ENCODE measurements at regions of chr18 and their contacts with region 1.

Region 1: GRCh38 chr18:74081966-74082741 is 65.5 kb downstream of the FBXO15 start:
- DNase-seq: peak; percentile 40 to 48
- H3K4me3 ChIP-seq: no peak overlapping the region
- H3K4me3 Mint-ChIP-seq: no peak overlapping the region
- H3K27ac Mint-ChIP-seq: no peak overlapping the region
- H3K4me1 ChIP-seq: no peaks in the 10 kb centered on the region
- H3K4me1 Mint-ChIP-seq: no peaks in the 10 kb centered on the region
- H3K27me3 ChIP-seq: no peaks in the 10 kb centered on the region
- H3K27me3 Mint-ChIP-seq: peaks cover 11% of the 10 kb centered on the region
- CTCF ChIP-seq: peak; percentile 18 to 47

Region 2: GRCh38 chr18:74023220-74023619 is 58.9 kb before region 1 on chr18:
- CTCF ChIA-PET with region 1: no interaction called
- POLR2A ChIA-PET with region 1: no interaction called
- intact Hi-C with region 1: no loop called
- DNase-seq: no peak
- H3K4me3 ChIP-seq: no peak overlapping the region
- H3K4me3 Mint-ChIP-seq: no peak overlapping the region
- H3K27ac Mint-ChIP-seq: no peak overlapping the region
- H3K4me1 ChIP-seq: no peaks in the 10 kb centered on the region
- H3K4me1 Mint-ChIP-seq: no peaks in the 10 kb centered on the region
- H3K27me3 ChIP-seq: no peaks in the 10 kb centered on the region
- H3K27me3 Mint-ChIP-seq: peaks cover 8% of the 10 kb centered on the region
- CTCF ChIP-seq: no peak

Region 3: GRCh38 chr18:74116633-74117554 is 34.7 kb after region 1 on chr18:
- CTCF ChIA-PET with region 1: interaction called, 3 read pairs
- POLR2A ChIA-PET with region 1: no interaction called
- intact Hi-C with region 1: loop called (anchors 1 kb)
- DNase-seq: no peak
- H3K4me3 ChIP-seq: no peak overlapping the region
- H3K4me3 Mint-ChIP-seq: no peak overlapping the region
- H3K27ac Mint-ChIP-seq: no peak overlapping the region
- H3K4me1 ChIP-seq: no peaks in the 10 kb centered on the region
- H3K4me1 Mint-ChIP-seq: no peaks in the 10 kb centered on the region
- H3K27me3 ChIP-seq: no peaks in the 10 kb centered on the region
- H3K27me3 Mint-ChIP-seq: peaks cover 4% of the 10 kb centered on the region
- CTCF ChIP-seq: peak; percentile 20 to 49

Region 4: GRCh38 chr18:74264303-74265020 is 182.3 kb after region 1 on chr18:
- CTCF ChIA-PET with region 1: no interaction called
- POLR2A ChIA-PET with region 1: no interaction called
- intact Hi-C with region 1: no loop called
- DNase-seq: no peak
- H3K4me3 ChIP-seq: no peak overlapping the region
- H3K4me3 Mint-ChIP-seq: no peak overlapping the region
- H3K27ac Mint-ChIP-seq: no peak overlapping the region
- H3K4me1 ChIP-seq: no peaks in the 10 kb centered on the region
- H3K4me1 Mint-ChIP-seq: no peaks in the 10 kb centered on the region
- H3K27me3 ChIP-seq: no peaks in the 10 kb centered on the region
- H3K27me3 Mint-ChIP-seq: no peaks in the 10 kb centered on the region
- CTCF ChIP-seq: no peak

Region 5: DNA sequence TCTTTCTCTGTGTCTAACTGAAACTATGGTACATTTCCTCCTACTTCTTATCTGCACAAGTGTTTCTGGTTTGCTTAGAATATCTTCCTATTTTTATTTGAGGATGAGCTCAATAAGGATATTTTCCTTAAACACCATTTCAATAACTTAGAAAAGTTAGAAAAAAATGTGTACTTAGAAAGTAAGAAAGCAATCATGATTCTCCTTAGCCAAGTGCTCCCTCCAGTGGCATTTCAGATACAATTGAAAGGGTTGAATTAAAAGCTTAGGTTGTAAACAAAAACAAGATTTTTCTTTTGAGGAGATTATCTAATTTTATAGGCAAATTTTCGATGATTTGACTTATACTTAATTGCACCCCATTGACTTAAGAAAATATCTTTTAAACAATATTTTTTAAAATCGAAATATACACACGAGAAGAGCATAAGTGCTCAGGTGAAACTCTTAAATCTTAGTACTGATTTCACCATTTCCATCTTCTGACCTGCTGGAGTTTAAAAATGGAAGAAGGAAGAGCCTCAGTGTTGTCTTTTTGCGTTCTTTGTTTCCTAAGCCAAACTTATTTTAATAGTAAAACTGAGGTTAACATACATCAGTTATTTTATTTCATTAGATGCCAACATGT is 260.4 kb after region 1 on chr18:
- CTCF ChIA-PET with region 1: interaction called, 10 read pairs
- POLR2A ChIA-PET with region 1: no interaction called
- intact Hi-C with region 1: no loop called
- DNase-seq: peak in 1 of 2 experiments; percentile 26
- H3K4me3 ChIP-seq: no peak overlapping the region
- H3K4me3 Mint-ChIP-seq: no peak overlapping the region
- H3K27ac Mint-ChIP-seq: no peak overlapping the region
- H3K4me1 ChIP-seq: no peaks in the 10 kb centered on the region
- H3K4me1 Mint-ChIP-seq: peaks cover 3% of the 10 kb centered on the region
- H3K27me3 ChIP-seq: no peaks in the 10 kb centered on the region
- H3K27me3 Mint-ChIP-seq: no peaks in the 10 kb centered on the region
- CTCF ChIP-seq: peak; percentile 24 to 40